ENCODE measurements at regions of chr1 and their contacts with region 1.

Region 1: DNA sequence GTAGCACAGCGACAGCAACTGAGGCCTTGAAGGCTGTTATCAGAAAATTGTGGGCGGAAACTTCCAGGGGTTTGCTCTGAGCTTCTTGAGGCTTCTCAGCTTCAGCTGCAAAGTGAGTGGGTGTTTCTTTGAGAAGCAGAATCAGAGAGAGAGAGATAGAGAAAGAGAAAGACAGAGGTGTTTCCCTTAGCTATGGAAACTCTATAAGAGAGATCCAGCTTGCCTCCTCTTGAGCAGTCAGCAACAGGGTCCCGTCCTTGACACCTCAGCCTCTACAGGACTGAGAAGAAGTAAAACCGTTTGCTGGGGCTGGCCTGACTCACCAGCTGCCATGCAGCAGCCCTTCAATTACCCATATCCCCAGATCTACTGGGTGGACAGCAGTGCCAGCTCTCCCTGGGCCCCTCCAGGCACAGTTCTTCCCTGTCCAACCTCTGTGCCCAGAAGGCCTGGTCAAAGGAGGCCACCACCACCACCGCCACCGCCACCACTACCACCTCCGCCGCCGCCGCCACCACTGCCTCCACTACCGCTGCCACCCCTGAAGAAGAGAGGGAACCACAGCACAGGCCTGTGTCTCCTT is at the start of gene FASLG:
- DNase-seq: no peak
- ATAC-seq: peak in 2 of 8 donors; percentile 12 to 19
- H3K4me3 ChIP-seq: peak within 1 kb of the TSS in 1 of 10 donors; percentile 41
- H3K27ac ChIP-seq: peak within 1 kb of the TSS in 5 of 10 donors; percentile 7 to 75 (median 22)
- H3K4me1 ChIP-seq: peaks cover 0 to 10% (median 0%) of the 10 kb centered on the region in 9 donors
- H3K27me3 ChIP-seq: no peaks in the 10 kb centered on the region
- CTCF ChIP-seq: no peak
- total RNA-seq, gene FASLG: 0.11 to 1.7 (median 0.28) TPM in 3 of 10 donors, not detected in the others

Region 2: GRCh38 chr1:172699111-172699510 is 40.1 kb after region 1 on chr1:
- intact Hi-C with region 1: loop called in 2 of 10 experiments (anchors 5 kb)
- DNase-seq: no peak
- ATAC-seq: peak in 3 of 8 donors; percentile 25 to 59 (median 28)
- H3K4me3 ChIP-seq: no peak overlapping the region
- H3K27ac ChIP-seq: peak overlapping the region in 4 of 10 donors; percentile 25 to 65 (median 55)
- H3K4me1 ChIP-seq: peaks cover 0 to 48% (median 3%) of the 10 kb centered on the region in 9 donors
- H3K27me3 ChIP-seq: no peaks in the 10 kb centered on the region
- CTCF ChIP-seq: no peak

Region 3: GRCh38 chr1:172719694-172720138 is 60.8 kb after region 1 on chr1:
- intact Hi-C with region 1: loop called in 1 of 10 experiments (anchors 5 kb)
- DNase-seq: no peak
- ATAC-seq: peak in 1 of 8 donors; percentile 55
- H3K4me3 ChIP-seq: no peak overlapping the region
- H3K27ac ChIP-seq: no peak overlapping the region
- H3K4me1 ChIP-seq: peaks cover 0 to 20% (median 0%) of the 10 kb centered on the region in 9 donors
- H3K27me3 ChIP-seq: no peaks in the 10 kb centered on the region
- CTCF ChIP-seq: peak; percentile 34 to 77 (median 69)